ENCODE measurements at regions of chr14 and their contacts with region 1.

Region 1: GRCh38 chr14:46820291-46820690 is 168.7 kb upstream of the RPL10L start:
- DNase-seq: peak; percentile 77

Region 2: GRCh38 chr14:46417066-46417465 is 403.2 kb before region 1 on chr14:
- intact Hi-C with region 1: no loop called
- DNase-seq: no peak

Region 3: GRCh38 chr14:46840944-46841726 is 20.8 kb after region 1 on chr14:
- intact Hi-C with region 1: loop called in 1 of 2 experiments (anchors 2 kb)
- DNase-seq: no peak